Head of caudate nucleus (tissue), 42 donors: ENCODE measurements at regions of chr10 and their contacts with region 1.

Region 1: GRCh38 chr10:131453594-131454355 is 142.3 kb upstream of the TCERG1L start:
- DNase-seq: peak; percentile 67 to 94 (median 86)

Region 2: GRCh38 chr10:131579251-131580071 is 125.7 kb after region 1 on chr10:
- intact Hi-C with region 1: no loop called
- DNase-seq: peak in 5 of 42 donors; percentile 4 to 34 (median 25)

Region 3: DNA sequence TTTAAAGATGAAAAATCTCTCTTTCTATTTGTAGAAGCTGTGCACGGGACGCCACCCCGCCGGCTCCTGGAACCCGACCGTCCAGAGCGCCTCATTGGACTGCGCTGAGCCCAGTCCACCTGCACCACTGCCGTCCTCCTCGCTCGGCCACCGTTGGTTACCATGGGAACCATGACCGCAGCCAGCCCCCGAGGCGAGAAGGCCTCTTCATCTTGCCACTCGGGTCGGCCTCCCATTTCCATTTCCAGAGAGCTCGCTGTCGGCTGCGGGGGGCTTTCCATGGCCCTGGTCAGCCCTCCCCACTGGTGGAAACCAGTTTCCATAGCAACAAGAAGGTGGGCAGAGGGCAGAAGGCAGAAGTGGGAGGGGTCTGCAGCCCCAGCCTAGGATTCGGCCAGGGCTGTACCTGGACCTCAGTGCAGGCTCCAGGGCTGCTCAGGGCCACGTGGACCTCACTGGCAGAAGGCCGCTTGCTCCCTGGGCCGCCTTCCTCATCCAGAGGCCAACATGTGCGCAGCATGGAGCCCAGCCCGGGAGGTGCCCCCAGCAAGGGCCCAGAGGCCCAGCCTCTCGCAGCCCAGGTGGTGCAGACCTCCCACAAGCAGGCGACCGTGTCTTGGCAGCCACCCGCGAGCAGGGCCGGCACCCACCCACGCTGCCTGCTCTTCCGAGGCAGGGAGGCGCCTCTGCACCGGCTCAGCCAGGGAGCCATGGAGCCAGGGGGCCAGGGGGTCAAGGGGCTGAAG is 163.5 kb after region 1 on chr10:
- intact Hi-C with region 1: no loop called
- DNase-seq: no peak

Region 4: DNA sequence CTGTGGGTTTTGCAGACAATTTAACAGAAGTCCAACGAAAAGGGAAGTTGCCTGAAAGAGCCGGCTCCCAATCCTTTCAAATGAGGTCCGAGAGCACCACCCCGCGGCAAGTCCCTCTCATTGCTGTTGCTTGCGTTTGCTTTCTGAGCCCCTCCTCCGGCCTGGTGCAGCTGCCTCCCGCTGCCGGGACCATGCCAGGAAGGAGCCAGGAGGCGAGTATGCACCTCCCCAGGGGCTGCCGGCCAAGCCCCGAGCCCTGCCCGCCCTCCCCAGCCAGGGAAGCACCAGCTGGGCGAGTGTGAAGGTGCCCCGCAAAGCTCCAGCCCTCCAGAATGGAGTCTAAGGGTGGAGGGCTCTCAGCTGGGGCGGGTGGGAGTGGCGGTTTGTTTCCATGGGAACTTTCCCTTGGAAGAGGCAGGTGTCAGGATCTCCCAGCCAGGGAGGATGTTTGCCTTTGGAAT is 421.2 kb after region 1 on chr10:
- intact Hi-C with region 1: loop called (anchors 10 kb)
- DNase-seq: peak; percentile 71 to 92 (median 84)